Naive thymus-derived CD4-positive, alpha-beta T cell (primary cell): ENCODE measurements at regions of chr9 and their contacts with region 1.

Region 1: GRCh38 chr9:88922031-88922430 is 69.2 kb upstream of the S1PR3 start:
- DNase-seq: peak in 7 of 9 donors; percentile 62 to 82 (median 75)
- ATAC-seq: peak; percentile 70
- H3K4me3 ChIP-seq: peak overlapping the region; percentile 26
- H3K4me3 Mint-ChIP-seq: peak overlapping the region; percentile 46 to 86 (median 76)
- H3K27ac ChIP-seq: no peak overlapping the region
- H3K27ac Mint-ChIP-seq: peak overlapping the region in 8 of 9 donors; percentile 25 to 88 (median 60)
- H3K4me1 ChIP-seq: peaks cover 28 to 39% of the 10 kb centered on the region in 2 donors
- H3K4me1 Mint-ChIP-seq: peaks cover 20 to 67% (median 55%) of the 10 kb centered on the region in 7 donors
- H3K27me3 ChIP-seq: no peaks in the 10 kb centered on the region
- H3K27me3 Mint-ChIP-seq: peaks cover 0 to 31% (median 0%) of the 10 kb centered on the region in 5 donors

Region 2: GRCh38 chr9:88694625-88695024 is 227.4 kb before region 1 on chr9:
- CTCF ChIA-PET with region 1: no interaction called
- POLR2A ChIA-PET with region 1: no interaction called
- intact Hi-C with region 1: no loop called
- DNase-seq: no peak
- ATAC-seq: no peak
- H3K4me3 ChIP-seq: no peak overlapping the region
- H3K4me3 Mint-ChIP-seq: no peak overlapping the region
- H3K27ac ChIP-seq: no peak overlapping the region
- H3K27ac Mint-ChIP-seq: no peak overlapping the region
- H3K4me1 ChIP-seq: no peaks in the 10 kb centered on the region
- H3K4me1 Mint-ChIP-seq: no peaks in the 10 kb centered on the region
- H3K27me3 ChIP-seq: no peaks in the 10 kb centered on the region
- H3K27me3 Mint-ChIP-seq: peaks cover 3 to 36% (median 22%) of the 10 kb centered on the region in 5 donors

Region 3: GRCh38 chr9:88835038-88835466 is 87.0 kb before region 1 on chr9:
- CTCF ChIA-PET with region 1: no interaction called
- POLR2A ChIA-PET with region 1: no interaction called
- intact Hi-C with region 1: loop called in 1 of 2 experiments (anchors 1 kb)
- DNase-seq: peak in 7 of 9 donors; percentile 45 to 81 (median 79)
- ATAC-seq: peak; percentile 95
- H3K4me3 ChIP-seq: no peak overlapping the region
- H3K4me3 Mint-ChIP-seq: peak overlapping the region in 9 of 10 donors; percentile 2 to 82 (median 64)
- H3K27ac ChIP-seq: no peak overlapping the region
- H3K27ac Mint-ChIP-seq: peak overlapping the region in 6 of 9 donors; percentile 22 to 90 (median 69)
- H3K4me1 ChIP-seq: peaks cover 16 to 25% of the 10 kb centered on the region in 2 donors
- H3K4me1 Mint-ChIP-seq: peaks cover 9 to 35% (median 27%) of the 10 kb centered on the region in 7 donors
- H3K27me3 ChIP-seq: peaks cover 0 to 19% of the 10 kb centered on the region in 2 donors
- H3K27me3 Mint-ChIP-seq: peaks cover 55 to 82% (median 72%) of the 10 kb centered on the region in 5 donors

Region 4: DNA sequence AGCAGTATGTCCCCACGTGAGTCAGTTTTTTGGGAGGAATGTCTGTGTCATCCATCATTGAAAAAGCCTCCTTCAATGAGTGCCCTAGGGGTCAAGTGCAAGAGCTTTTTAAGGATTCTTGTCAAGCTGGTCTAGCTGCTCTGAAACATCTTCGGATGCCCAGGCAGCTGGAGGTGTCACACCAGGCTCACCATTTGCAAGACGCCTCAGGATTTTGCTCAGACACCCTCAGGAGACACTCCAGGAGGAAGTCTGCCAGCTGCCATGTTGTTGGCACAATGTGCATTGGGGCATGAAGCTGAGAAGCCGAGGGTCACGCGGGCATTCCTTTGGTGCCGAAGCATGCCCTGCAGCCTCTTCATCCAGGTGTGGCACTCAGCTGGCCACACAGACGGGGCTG is 41.8 kb before region 1 on chr9:
- CTCF ChIA-PET with region 1: no interaction called
- POLR2A ChIA-PET with region 1: no interaction called
- intact Hi-C with region 1: loop called in 1 of 2 experiments (anchors 5 kb)
- DNase-seq: no peak
- ATAC-seq: no peak
- H3K4me3 ChIP-seq: no peak overlapping the region
- H3K4me3 Mint-ChIP-seq: no peak overlapping the region
- H3K27ac ChIP-seq: no peak overlapping the region
- H3K27ac Mint-ChIP-seq: no peak overlapping the region
- H3K4me1 ChIP-seq: no peaks in the 10 kb centered on the region
- H3K4me1 Mint-ChIP-seq: peaks cover 0 to 15% (median 13%) of the 10 kb centered on the region in 7 donors
- H3K27me3 ChIP-seq: no peaks in the 10 kb centered on the region
- H3K27me3 Mint-ChIP-seq: peaks cover 0 to 21% (median 9%) of the 10 kb centered on the region in 5 donors

Region 5: GRCh38 chr9:88959727-88960469 is 37.9 kb after region 1 on chr9:
- CTCF ChIA-PET with region 1: no interaction called
- POLR2A ChIA-PET with region 1: no interaction called
- intact Hi-C with region 1: loop called in 1 of 2 experiments (anchors 5 kb)
- DNase-seq: no peak
- ATAC-seq: no peak
- H3K4me3 ChIP-seq: no peak overlapping the region
- H3K4me3 Mint-ChIP-seq: no peak overlapping the region
- H3K27ac ChIP-seq: no peak overlapping the region
- H3K27ac Mint-ChIP-seq: no peak overlapping the region
- H3K4me1 ChIP-seq: no peaks in the 10 kb centered on the region
- H3K4me1 Mint-ChIP-seq: peaks cover 0 to 1% (median 0%) of the 10 kb centered on the region in 7 donors
- H3K27me3 ChIP-seq: no peaks in the 10 kb centered on the region
- H3K27me3 Mint-ChIP-seq: peaks cover 20 to 30% (median 24%) of the 10 kb centered on the region in 5 donors

Region 6: GRCh38 chr9:88988796-88989560 is 66.9 kb after region 1 on chr9:
- CTCF ChIA-PET with region 1: no interaction called
- POLR2A ChIA-PET with region 1: no interaction called
- intact Hi-C with region 1: loop called in 1 of 2 experiments (anchors 2 kb)
- DNase-seq: peak in 5 of 9 donors; percentile 8 to 27 (median 16)
- ATAC-seq: peak; percentile 75
- H3K4me3 ChIP-seq: no peak overlapping the region
- H3K4me3 Mint-ChIP-seq: peak overlapping the region in 9 of 10 donors; percentile 31 to 68 (median 54)
- H3K27ac ChIP-seq: no peak overlapping the region
- H3K27ac Mint-ChIP-seq: peak overlapping the region in 3 of 9 donors; percentile 24 to 84 (median 27)
- H3K4me1 ChIP-seq: peaks cover 0 to 19% of the 10 kb centered on the region in 2 donors
- H3K4me1 Mint-ChIP-seq: peaks cover 11 to 34% (median 24%) of the 10 kb centered on the region in 7 donors
- H3K27me3 ChIP-seq: peaks cover 0 to 17% of the 10 kb centered on the region in 2 donors
- H3K27me3 Mint-ChIP-seq: peaks cover 21 to 49% (median 30%) of the 10 kb centered on the region in 5 donors